ENCODE measurements at regions of chr1 and their contacts with region 1.

Region 1: GRCh38 chr1:179365320-179366092 is at the start of gene AXDND1:
- DNase-seq: peak; percentile 94
- H3K4me3 Mint-ChIP-seq: peak within 1 kb of the TSS; percentile 93
- H3K27ac Mint-ChIP-seq: peak within 1 kb of the TSS; percentile 100
- H3K4me1 Mint-ChIP-seq: peaks cover 21% of the 10 kb centered on the region
- H3K27me3 Mint-ChIP-seq: no peaks in the 10 kb centered on the region
- total RNA-seq, gene AXDND1: 0.57 to 0.67 TPM

Region 2: DNA sequence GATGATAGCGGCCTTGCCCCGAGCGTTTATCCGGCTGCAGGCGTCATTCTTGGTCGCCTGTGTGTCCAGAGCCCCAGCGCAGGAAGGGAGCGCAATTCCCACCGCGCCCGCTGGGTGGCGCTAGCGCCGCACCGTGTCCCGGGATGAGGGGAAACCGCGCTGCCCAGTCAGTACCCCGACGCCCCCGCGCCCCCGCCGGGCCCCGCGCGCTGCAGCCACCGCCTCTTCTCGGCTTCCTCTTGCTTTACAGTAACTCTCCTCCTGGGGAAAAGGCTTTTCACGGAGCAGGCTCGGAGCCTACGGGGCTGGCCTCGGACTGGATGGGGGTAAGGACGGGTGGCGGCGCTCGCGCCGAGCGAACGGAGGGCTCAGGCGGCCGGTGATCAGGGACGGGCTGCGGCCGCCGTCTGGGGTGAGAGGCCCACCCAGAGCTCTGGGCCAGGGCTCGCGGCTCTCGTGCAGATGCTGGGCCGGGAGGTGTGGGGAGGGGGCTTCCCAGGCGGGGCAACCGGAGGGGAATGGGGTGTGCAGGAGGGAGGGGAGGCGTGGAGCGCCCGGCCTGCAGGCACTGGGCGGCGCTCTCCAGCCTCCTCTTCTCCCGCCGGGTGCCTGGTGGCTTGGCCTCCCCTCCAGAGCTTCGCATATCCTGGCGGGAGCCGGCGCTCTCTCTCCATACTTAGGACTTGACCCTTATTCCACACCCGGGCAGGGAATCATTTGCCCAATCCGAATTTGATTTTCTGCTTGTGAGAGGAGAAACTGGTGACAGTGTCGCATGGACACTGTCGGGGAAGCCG is 822.7 kb before region 1 on chr1:
- CTCF ChIA-PET with region 1: no interaction called
- intact Hi-C with region 1: loop called (anchors 1 kb)
- DNase-seq: peak; percentile 92
- H3K4me3 Mint-ChIP-seq: peak overlapping the region; percentile 87
- H3K27ac Mint-ChIP-seq: peak overlapping the region; percentile 72
- H3K4me1 Mint-ChIP-seq: peaks cover 4% of the 10 kb centered on the region
- H3K27me3 Mint-ChIP-seq: no peaks in the 10 kb centered on the region

Region 3: GRCh38 chr1:179025125-179025974 is 340.2 kb before region 1 on chr1 and contains the start of gene FAM20B:
- CTCF ChIA-PET with region 1: interaction called, 3 read pairs
- intact Hi-C with region 1: loop called (anchors 1 kb)
- DNase-seq: peak; percentile 91
- H3K4me3 Mint-ChIP-seq: peak within 1 kb of the TSS; percentile 85
- H3K27ac Mint-ChIP-seq: peak within 1 kb of the TSS; percentile 78
- H3K4me1 Mint-ChIP-seq: peaks cover 34% of the 10 kb centered on the region
- H3K27me3 Mint-ChIP-seq: no peaks in the 10 kb centered on the region
- total RNA-seq, gene FAM20B: 35.1 to 36.1 TPM

Region 4: GRCh38 chr1:179129702-179130473 is 235.6 kb before region 1 on chr1:
- CTCF ChIA-PET with region 1: interaction called, 7 read pairs
- intact Hi-C with region 1: loop called (anchors 1 kb)
- DNase-seq: peak; percentile 24
- H3K4me3 Mint-ChIP-seq: peak overlapping the region; percentile 60
- H3K27ac Mint-ChIP-seq: peak overlapping the region; percentile 87
- H3K4me1 Mint-ChIP-seq: peaks cover 37% of the 10 kb centered on the region
- H3K27me3 Mint-ChIP-seq: no peaks in the 10 kb centered on the region

Region 5: GRCh38 chr1:179251675-179252074 is 113.8 kb before region 1 on chr1:
- CTCF ChIA-PET with region 1: interaction called, 14 read pairs
- intact Hi-C with region 1: loop called (anchors 1 kb)
- DNase-seq: no peak
- H3K4me3 Mint-ChIP-seq: no peak overlapping the region
- H3K27ac Mint-ChIP-seq: no peak overlapping the region
- H3K4me1 Mint-ChIP-seq: no peaks in the 10 kb centered on the region
- H3K27me3 Mint-ChIP-seq: no peaks in the 10 kb centered on the region

Region 6: GRCh38 chr1:179263121-179263520 is 102.4 kb before region 1 on chr1:
- CTCF ChIA-PET with region 1: no interaction called
- intact Hi-C with region 1: no loop called
- DNase-seq: no peak
- H3K4me3 Mint-ChIP-seq: no peak overlapping the region
- H3K27ac Mint-ChIP-seq: no peak overlapping the region
- H3K4me1 Mint-ChIP-seq: no peaks in the 10 kb centered on the region
- H3K27me3 Mint-ChIP-seq: no peaks in the 10 kb centered on the region

Measured in activated naive CD4-positive, alpha-beta T cell treated with anti-CD3 and anti-CD28 coated beads for 36 hours (primary cell).